ENCODE measurements at regions of chr4 and their contacts with region 1.

Region 1: DNA sequence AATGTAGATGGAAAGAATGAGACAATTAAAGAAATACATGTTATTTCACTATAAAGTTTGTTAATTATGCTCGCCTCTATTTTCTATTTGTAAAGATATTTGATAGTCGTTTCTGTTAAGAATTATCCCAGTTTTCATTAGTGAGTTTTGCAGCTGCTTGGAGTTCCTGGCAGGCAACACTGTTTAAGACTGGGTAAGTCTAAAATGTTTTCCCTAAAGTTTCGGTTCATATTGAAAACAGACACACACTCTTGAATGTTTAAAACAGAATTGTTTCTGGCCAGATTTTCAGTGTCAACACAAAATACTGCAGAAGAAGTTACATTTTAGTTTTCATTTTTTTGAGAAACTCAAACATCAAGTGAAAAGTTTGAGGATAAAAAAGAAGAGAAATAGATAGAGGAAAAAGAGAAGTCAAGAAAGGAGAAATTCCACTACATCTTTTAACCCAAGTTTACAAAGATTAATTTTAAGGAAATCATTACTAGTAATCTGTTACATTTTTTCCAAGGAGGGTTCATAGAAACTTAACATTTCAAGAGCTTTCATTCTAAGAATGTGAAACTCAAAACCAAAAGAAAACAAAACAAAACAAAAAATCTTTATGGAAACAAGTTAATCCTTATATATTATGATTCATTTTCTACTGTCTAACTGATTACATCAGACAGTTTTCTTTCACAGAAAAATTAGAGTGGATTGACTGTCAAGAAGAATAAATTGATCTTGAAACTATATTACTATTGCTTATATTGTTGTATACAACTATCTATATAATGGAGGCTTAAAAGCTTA is 305.5 kb downstream of the FAT4 start:
- DNase-seq: no peak
- ATAC-seq: no peak
- H3K4me3 ChIP-seq: no peak overlapping the region
- H3K27ac ChIP-seq: no peak overlapping the region
- H3K4me1 ChIP-seq: no peaks in the 10 kb centered on the region
- H3K27me3 ChIP-seq: no peaks in the 10 kb centered on the region
- CTCF ChIP-seq: no peak
- EP300 ChIP-seq: no peak
- POLR2A ChIP-seq: no peak
- RAD21 ChIP-seq: no peak

Region 2: GRCh38 chr4:123819362-123820035 is 1800.8 kb before region 1 on chr4:
- CTCF ChIA-PET with region 1: no interaction called
- POLR2A ChIA-PET with region 1: no interaction called
- RAD21 ChIA-PET with region 1: no interaction called
- SMC1A ChIA-PET with region 1: no interaction called
- in situ Hi-C with region 1: no loop called
- intact Hi-C with region 1: loop called (anchors 10 kb)
- DNase-seq: no peak
- ATAC-seq: no peak
- H3K4me3 ChIP-seq: no peak overlapping the region
- H3K27ac ChIP-seq: no peak overlapping the region
- H3K4me1 ChIP-seq: no peaks in the 10 kb centered on the region
- H3K27me3 ChIP-seq: no peaks in the 10 kb centered on the region; a peak in 1 of 4 replicates
- CTCF ChIP-seq: no peak
- EP300 ChIP-seq: no peak
- POLR2A ChIP-seq: no peak
- RAD21 ChIP-seq: no peak